ENCODE measurements at regions of chr2 and their contacts with region 1.

Region 1: GRCh38 chr2:240579771-240580614 is 6.5 kb upstream of the CAPN10 start:
- DNase-seq: peak; percentile 83 to 89 (median 85)
- H3K4me3 ChIP-seq: peak overlapping the region in 1 of 2 donors; percentile 8
- H3K4me3 Mint-ChIP-seq: peak overlapping the region; percentile 5 to 70 (median 47)
- H3K27ac ChIP-seq: peak overlapping the region; percentile 30
- H3K27ac Mint-ChIP-seq: peak overlapping the region; percentile 74 to 93 (median 88)
- H3K4me1 ChIP-seq: peaks cover 34% of the 10 kb centered on the region
- H3K4me1 Mint-ChIP-seq: peaks cover 19 to 50% (median 36%) of the 10 kb centered on the region in 4 donors
- H3K27me3 ChIP-seq: no peaks in the 10 kb centered on the region
- H3K27me3 Mint-ChIP-seq: no peaks in the 10 kb centered on the region

Region 2: DNA sequence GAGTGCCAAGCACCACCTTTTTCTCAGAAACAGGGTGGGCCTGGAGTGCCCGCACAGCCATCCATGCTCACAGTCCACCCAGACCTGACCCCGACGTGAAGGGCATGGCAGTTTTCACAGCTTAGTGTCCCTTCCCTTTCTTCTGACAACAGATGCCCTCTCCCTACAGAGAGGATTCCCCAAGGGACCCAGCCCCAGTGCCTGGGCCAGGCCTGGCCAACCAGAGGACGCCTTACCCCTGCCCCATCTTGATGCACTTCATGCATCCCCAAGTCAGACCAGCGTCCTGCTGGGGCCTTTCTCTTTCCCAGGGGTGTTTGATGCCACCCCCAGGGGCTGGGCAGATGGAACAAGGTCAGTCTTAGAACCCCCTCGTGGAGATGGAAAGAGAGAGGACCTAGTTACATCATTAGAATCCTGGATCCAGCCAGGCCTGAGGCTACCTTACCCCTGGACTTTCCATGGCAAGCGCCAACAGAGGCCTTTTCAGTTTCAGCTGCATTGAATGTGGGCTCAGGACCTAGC is 26.0 kb before region 1 on chr2:
- CTCF ChIA-PET with region 1: interaction called, 26 read pairs
- POLR2A ChIA-PET with region 1: interaction called, 461 read pairs
- intact Hi-C with region 1: no loop called
- DNase-seq: no peak
- H3K4me3 ChIP-seq: no peak overlapping the region
- H3K4me3 Mint-ChIP-seq: no peak overlapping the region
- H3K27ac ChIP-seq: no peak overlapping the region
- H3K27ac Mint-ChIP-seq: no peak overlapping the region
- H3K4me1 ChIP-seq: peaks cover 30% of the 10 kb centered on the region
- H3K4me1 Mint-ChIP-seq: peaks cover 13 to 34% (median 19%) of the 10 kb centered on the region in 4 donors
- H3K27me3 ChIP-seq: no peaks in the 10 kb centered on the region
- H3K27me3 Mint-ChIP-seq: no peaks in the 10 kb centered on the region

Region 3: DNA sequence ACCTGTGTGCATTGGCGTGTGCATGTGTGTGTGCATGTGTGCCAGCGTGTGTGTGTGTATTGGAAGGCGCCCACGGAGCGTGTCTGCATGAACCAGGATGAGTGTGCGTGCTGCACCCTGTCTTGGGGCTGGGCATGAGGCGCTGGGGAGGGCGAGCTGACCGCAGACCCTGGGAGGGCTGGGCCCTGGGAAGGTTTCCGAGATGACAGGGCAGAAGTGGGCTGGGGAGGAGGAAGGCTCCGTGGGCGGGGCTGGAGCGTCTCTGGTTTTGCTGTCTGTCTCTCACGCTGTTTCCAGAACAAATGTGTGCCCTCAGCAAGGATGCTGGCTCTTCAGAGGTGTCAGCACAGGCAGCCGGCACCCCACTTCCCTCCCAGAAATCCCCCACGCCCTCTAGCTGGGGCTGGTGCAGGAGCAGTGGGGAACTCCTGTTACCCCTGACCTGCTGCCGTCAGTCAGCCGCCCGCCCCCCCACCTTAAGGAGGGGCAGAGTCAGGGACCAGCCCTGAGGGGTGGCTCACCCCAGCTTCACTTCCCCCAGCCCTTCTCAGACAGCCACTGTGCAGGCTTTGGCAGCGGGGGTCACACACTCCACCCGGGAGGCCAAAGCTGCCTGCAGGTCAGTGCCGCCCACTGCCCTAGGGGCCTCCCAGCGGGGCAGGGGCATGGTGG is 45.1 kb after region 1 on chr2 and contains the start of gene GPR35:
- CTCF ChIA-PET with region 1: interaction called, 14 read pairs
- POLR2A ChIA-PET with region 1: interaction called, 69 read pairs
- intact Hi-C with region 1: no loop called
- DNase-seq: peak; percentile 74 to 96 (median 80)
- H3K4me3 ChIP-seq: no peak within 1 kb of the TSS
- H3K4me3 Mint-ChIP-seq: peak within 1 kb of the TSS; percentile 61 to 79 (median 68)
- H3K27ac ChIP-seq: peak within 1 kb of the TSS; percentile 81
- H3K27ac Mint-ChIP-seq: peak within 1 kb of the TSS; percentile 90 to 96 (median 95)
- H3K4me1 ChIP-seq: peaks cover 88% of the 10 kb centered on the region
- H3K4me1 Mint-ChIP-seq: peaks cover 34 to 70% (median 44%) of the 10 kb centered on the region in 4 donors
- H3K27me3 ChIP-seq: no peaks in the 10 kb centered on the region
- H3K27me3 Mint-ChIP-seq: no peaks in the 10 kb centered on the region
- total RNA-seq, gene GPR35: 6.3 to 6.8 TPM

Region 4: DNA sequence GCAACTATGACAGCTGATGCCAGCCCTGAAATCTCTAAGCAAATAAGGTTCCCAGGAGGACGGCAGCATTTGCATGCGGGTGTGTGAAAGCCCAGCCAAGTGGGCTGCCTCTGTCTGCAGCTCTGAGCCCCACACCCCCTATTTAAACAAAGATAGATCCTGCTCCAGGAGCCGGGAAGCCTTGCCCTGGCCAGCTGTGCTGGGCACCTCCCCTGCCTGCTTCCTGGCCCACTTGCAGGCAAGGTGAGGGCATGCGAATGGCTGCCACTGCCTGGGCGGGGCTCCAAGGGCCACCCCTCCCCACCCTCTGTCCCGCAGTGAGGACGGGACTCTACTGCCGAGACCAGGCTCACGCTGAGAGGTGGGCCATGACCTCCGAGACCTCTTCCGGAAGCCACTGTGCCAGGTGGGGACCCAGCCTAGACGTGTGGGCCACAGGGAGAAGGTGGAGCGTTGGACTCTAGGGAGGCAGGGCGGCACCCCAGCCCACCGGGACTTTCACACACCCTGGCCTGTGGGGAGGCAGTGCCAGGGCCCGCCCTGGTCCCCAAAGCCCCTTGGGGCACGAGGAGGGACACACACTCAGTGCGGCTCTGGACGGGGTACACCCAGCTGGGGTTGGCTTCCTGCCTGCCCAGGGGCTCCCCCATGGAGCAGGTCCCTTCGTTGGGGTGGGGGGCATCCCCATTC is 608.5 kb after region 1 on chr2 and contains the start of gene ANO7:
- CTCF ChIA-PET with region 1: no interaction called
- POLR2A ChIA-PET with region 1: no interaction called
- intact Hi-C with region 1: no loop called
- DNase-seq: no peak
- H3K4me3 ChIP-seq: no peak within 1 kb of the TSS
- H3K4me3 Mint-ChIP-seq: no peak within 1 kb of the TSS
- H3K27ac ChIP-seq: no peak within 1 kb of the TSS
- H3K27ac Mint-ChIP-seq: no peak within 1 kb of the TSS
- H3K4me1 ChIP-seq: no peaks in the 10 kb centered on the region
- H3K4me1 Mint-ChIP-seq: no peaks in the 10 kb centered on the region
- H3K27me3 ChIP-seq: no peaks in the 10 kb centered on the region
- H3K27me3 Mint-ChIP-seq: no peaks in the 10 kb centered on the region
- total RNA-seq, gene ANO7: 0.53 to 0.81 TPM